Gastrocnemius medialis (tissue), 4 donors: ENCODE measurements at regions of chr6 and their contacts with region 1.

Region 1: GRCh38 chr6:56914798-56915658 is 39.9 kb upstream of the BEND6 start:
- DNase-seq: peak; percentile 13 to 35
- ATAC-seq: peak; percentile 72 to 82
- H3K4me3 ChIP-seq: no peak overlapping the region
- H3K27ac ChIP-seq: peak overlapping the region in 2 of 4 donors; percentile 28 to 35
- H3K4me1 ChIP-seq: peaks cover 3 to 5% of the 10 kb centered on the region in 2 donors
- H3K27me3 ChIP-seq: no peaks in the 10 kb centered on the region
- CTCF ChIP-seq: no peak
- POLR2A ChIP-seq: no peak

Region 2: GRCh38 chr6:56955171-56956045 is 40.4 kb after region 1 on chr6:
- in situ Hi-C with region 1: no loop called
- intact Hi-C with region 1: loop called (anchors 5 kb)
- DNase-seq: peak; percentile 40 to 71
- ATAC-seq: peak; percentile 87 to 89
- H3K4me3 ChIP-seq: peak overlapping the region; percentile 41 to 80 (median 58)
- H3K27ac ChIP-seq: peak overlapping the region in 1 of 4 donors; percentile 28
- H3K4me1 ChIP-seq: peaks cover 8 to 15% of the 10 kb centered on the region in 2 donors
- H3K27me3 ChIP-seq: no peaks in the 10 kb centered on the region
- CTCF ChIP-seq: peak; percentile 39 to 75 (median 64)
- POLR2A ChIP-seq: no peak

Region 3: GRCh38 chr6:57013521-57013926 is 98.5 kb after region 1 on chr6:
- in situ Hi-C with region 1: loop called in 2 of 4 experiments (anchors 5 to 25 kb)
- intact Hi-C with region 1: no loop called
- DNase-seq: no peak
- ATAC-seq: no peak
- H3K4me3 ChIP-seq: no peak overlapping the region
- H3K27ac ChIP-seq: no peak overlapping the region
- H3K4me1 ChIP-seq: no peaks in the 10 kb centered on the region
- H3K27me3 ChIP-seq: no peaks in the 10 kb centered on the region
- CTCF ChIP-seq: no peak
- POLR2A ChIP-seq: no peak